Left ventricle myocardium inferior (tissue), 1 donor: ENCODE measurements at regions of chr2 and their contacts with region 1.

Region 1: DNA sequence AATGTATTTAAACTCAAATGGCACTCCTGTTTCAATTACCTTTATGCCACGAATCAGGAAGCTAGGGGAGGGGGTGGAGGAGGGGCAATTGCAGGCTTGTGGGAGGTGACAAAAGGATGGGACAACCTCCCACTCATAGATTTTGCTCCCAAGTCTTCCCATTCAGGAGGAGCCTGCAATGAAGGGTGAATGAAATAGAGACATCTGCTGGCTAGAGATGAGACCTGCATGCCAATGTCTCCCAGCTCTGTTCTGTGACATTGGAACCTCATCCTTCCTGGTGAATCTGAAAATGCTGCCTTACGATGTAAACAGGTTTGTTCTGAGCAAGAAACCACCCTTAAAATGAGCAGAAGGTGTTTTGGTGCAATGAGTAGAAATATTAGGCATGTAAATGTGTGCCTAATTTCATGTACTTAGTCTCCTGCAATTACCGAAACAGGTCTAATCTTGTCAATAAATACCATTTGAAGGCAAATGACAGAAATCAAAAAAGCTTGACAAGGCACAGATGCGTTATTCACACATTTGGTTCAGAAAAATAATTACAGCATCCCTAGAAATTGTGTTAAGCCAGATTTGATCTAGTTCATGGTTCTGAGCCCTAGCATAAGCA is 2.7 kb upstream of the PID1 start:
- DNase-seq: peak; percentile 24
- H3K4me3 ChIP-seq: peak overlapping the region; percentile 50
- H3K27ac ChIP-seq: no peak overlapping the region
- H3K4me1 ChIP-seq: peaks cover 13% of the 10 kb centered on the region
- H3K27me3 ChIP-seq: peaks cover 23% of the 10 kb centered on the region
- CTCF ChIP-seq: peak; percentile 83

Region 2: GRCh38 chr2:228700638-228701037 is 573.2 kb before region 1 on chr2:
- intact Hi-C with region 1: loop called (anchors 10 kb)
- DNase-seq: no peak
- H3K4me3 ChIP-seq: no peak overlapping the region
- H3K27ac ChIP-seq: no peak overlapping the region
- H3K4me1 ChIP-seq: no peaks in the 10 kb centered on the region
- H3K27me3 ChIP-seq: no peaks in the 10 kb centered on the region
- CTCF ChIP-seq: no peak

Region 3: DNA sequence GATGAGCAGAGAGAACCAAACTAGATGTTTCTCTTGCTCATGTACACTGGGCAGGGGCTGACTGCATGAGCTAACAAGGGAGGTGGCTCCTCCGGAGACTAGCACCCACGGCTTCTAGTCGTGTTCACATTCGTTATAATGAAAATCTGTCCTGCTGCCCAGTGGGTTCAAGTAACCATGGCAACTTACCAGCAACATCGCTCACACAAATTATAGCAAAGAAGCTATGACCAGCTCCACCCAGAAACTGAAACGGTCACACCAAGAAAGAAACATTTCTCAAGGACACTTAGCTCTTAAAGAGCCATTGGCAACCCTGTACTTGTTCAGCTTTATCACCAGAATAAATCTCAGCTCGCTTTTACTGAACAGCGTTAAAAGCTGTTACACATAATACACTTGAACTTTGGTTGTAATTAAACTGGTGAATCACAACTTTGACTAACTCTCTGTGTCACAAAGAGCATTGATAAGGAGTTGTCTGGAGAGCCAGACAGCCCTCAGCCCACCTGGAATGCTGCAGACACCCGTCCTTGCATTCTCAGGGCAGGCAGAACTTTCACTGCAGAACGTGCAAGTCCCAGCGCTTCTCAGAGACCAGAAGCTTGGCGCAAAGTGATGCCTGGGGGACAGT is 144.0 kb before region 1 on chr2:
- intact Hi-C with region 1: loop called (anchors 10 kb)
- DNase-seq: no peak
- H3K4me3 ChIP-seq: no peak overlapping the region
- H3K27ac ChIP-seq: peak overlapping the region; percentile 4
- H3K4me1 ChIP-seq: peaks cover 13% of the 10 kb centered on the region
- H3K27me3 ChIP-seq: no peaks in the 10 kb centered on the region
- CTCF ChIP-seq: no peak

Region 4: GRCh38 chr2:229179628-229180027 is 94.2 kb before region 1 on chr2:
- intact Hi-C with region 1: no loop called
- DNase-seq: no peak
- H3K4me3 ChIP-seq: no peak overlapping the region
- H3K27ac ChIP-seq: peak overlapping the region; percentile 55
- H3K4me1 ChIP-seq: peaks cover 18% of the 10 kb centered on the region
- H3K27me3 ChIP-seq: no peaks in the 10 kb centered on the region
- CTCF ChIP-seq: no peak